Heart right ventricle (tissue), 16 donors: ENCODE measurements at regions of chr17 and their contacts with region 1.

Region 1: DNA sequence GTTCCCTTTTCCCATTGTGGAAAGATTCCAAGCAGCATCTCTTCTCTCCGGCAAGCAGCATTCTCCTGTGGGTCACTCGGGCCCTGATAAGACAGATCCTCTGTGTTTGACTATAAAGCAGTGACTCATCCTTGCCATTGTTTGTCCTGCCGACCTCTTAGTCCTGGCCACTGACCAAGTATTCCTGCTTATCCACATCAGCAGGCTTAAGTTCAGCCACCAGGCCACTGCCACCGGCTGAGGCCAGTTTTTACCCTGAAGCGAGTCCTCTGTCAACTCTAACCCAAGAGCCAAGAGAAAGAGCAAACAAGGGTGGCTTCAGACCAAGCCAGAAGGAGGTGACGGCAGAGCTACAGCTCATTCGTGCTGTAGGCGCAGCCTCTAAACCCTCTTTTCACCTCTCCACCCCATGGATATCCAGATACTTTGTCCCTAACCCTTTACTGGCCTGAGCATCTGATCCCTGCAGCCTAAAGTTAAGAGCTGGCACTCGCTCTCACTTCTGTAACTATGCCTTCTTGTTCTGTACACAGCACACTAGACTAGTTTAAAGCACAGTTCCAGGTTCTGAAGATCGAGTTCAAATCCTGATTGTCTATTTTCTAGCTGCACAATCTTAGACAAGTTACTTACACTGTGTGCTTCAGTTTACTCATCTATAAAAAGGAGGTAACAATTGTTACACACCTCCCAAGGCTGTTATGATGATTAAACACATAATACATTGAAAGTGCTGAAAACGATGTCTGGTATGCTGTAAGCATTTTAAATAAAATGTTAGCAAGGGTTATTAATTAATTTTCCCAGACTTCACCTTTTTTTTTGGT is 31.0 kb downstream of the SOX9 start:
- DNase-seq: peak; percentile 50 to 78
- ATAC-seq: peak; percentile 77 to 96 (median 94)
- H3K4me3 ChIP-seq: peak overlapping the region in 4 of 10 donors; percentile 3 to 32 (median 13)
- H3K27ac ChIP-seq: peak overlapping the region; percentile 57 to 89 (median 82)
- H3K4me1 ChIP-seq: peaks cover 0 to 23% (median 15%) of the 10 kb centered on the region in 9 donors
- H3K27me3 ChIP-seq: no peaks in the 10 kb centered on the region
- CTCF ChIP-seq: no peak

Region 2: GRCh38 chr17:72097144-72097543 is 54.6 kb before region 1 on chr17:
- intact Hi-C with region 1: loop called in 1 of 10 experiments (anchors 2 kb)
- DNase-seq: no peak
- ATAC-seq: no peak
- H3K4me3 ChIP-seq: no peak overlapping the region
- H3K27ac ChIP-seq: no peak overlapping the region
- H3K4me1 ChIP-seq: no peaks in the 10 kb centered on the region
- H3K27me3 ChIP-seq: no peaks in the 10 kb centered on the region
- CTCF ChIP-seq: no peak

Region 3: DNA sequence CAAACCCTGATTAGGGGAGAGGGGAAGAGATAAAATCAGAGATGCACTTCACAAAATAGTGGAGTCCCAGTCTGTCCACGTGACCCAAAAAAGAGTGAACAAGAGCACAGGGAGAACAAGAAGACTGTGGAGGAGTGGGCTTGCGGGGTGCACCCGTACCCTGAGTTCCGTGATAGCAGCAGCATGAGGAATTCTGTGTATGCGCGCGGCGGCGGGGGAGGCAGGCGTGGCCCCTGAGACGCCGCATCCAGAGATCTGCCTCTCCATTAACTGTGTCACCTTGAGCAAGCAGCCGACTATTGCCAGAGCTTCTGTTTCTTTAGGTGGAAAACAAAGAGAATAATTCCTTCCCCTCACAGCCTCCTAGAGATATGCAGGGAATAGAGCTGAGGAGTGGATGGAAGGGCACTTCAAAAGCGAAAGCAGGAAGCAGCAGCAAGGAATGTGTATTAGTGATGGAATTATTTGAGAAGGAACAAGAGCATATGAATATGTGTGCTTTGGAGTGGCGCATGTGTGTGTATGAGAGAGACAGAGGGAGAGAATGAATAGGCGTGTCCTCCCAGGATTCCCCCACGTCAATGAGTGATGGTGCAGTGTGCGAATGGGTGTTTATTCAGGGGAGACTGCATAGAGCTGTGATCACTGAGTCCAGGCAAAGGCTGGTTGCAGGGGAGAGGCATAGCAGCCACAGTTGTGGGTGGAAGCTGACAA is 41.4 kb before region 1 on chr17:
- intact Hi-C with region 1: no loop called
- DNase-seq: no peak
- ATAC-seq: peak in 1 of 8 donors; percentile 22
- H3K4me3 ChIP-seq: peak overlapping the region in 8 of 10 donors; percentile 3 to 43 (median 28)
- H3K27ac ChIP-seq: no peak overlapping the region
- H3K4me1 ChIP-seq: peaks cover 0 to 10% (median 0%) of the 10 kb centered on the region in 9 donors
- H3K27me3 ChIP-seq: peaks cover 0 to 22% (median 7%) of the 10 kb centered on the region in 7 donors
- CTCF ChIP-seq: no peak

Region 4: GRCh38 chr17:72126563-72127486 is 25.0 kb before region 1 on chr17:
- intact Hi-C with region 1: loop called in 2 of 10 experiments (anchors 1 to 2 kb)
- DNase-seq: peak in 1 of 2 donors; percentile 25
- ATAC-seq: peak in 7 of 8 donors; percentile 31 to 75 (median 68)
- H3K4me3 ChIP-seq: no peak overlapping the region
- H3K27ac ChIP-seq: peak overlapping the region; percentile 3 to 94 (median 70)
- H3K4me1 ChIP-seq: peaks cover 0 to 47% (median 28%) of the 10 kb centered on the region in 9 donors
- H3K27me3 ChIP-seq: peaks cover 0 to 35% (median 27%) of the 10 kb centered on the region in 7 donors
- CTCF ChIP-seq: no peak